ENCODE measurements at regions of chr12 and their contacts with region 1.

Region 1: DNA sequence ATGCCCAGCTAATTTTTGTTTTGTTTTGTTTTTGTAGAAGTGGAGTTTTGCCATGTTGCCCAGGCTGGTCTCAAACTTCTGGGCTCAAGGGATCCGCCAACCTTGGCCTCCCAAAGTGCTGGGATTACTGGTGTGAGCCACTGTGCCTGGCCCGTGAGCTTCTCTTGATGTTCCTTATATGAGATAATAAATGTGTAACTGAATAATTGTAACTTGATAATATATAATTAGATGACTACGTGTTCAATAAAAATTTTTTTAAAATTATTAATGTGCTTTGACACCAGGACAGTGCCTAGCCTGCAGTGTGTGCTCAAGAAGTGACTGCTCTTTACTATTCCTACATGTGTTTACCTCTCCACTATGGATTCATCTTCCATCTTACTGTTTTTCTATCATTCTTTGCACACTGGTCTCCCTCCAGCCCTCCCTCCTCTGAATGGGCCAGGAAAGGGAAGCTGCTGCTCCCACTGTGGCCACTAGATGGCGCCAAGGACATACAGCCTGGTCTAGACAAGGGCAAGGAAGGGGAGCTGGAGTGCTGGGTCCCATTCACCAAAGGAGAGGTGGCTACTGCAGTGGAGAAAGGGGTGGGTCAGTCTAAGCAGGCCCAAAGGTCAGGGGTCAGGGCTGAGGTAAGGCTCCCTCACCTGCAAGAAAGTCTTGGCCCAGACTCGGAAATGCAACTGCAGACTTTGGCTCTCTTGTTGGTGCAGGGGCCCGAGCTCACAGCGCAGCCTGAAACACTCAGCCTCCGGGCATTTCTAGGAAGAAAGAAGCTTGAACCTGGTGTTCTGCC is 14.7 kb upstream of the ZNF385A start:
- DNase-seq: no peak
- H3K4me3 ChIP-seq: no peak overlapping the region
- H3K27me3 ChIP-seq: no peaks in the 10 kb centered on the region
- CTCF ChIP-seq: peak; percentile 100

Region 2: GRCh38 chr12:54385241-54385914 is 13.8 kb before region 1 on chr12:
- CTCF ChIA-PET with region 1: interaction called, 41 read pairs
- POLR2A ChIA-PET with region 1: no interaction called
- DNase-seq: no peak
- H3K4me3 ChIP-seq: no peak overlapping the region
- H3K27me3 ChIP-seq: no peaks in the 10 kb centered on the region
- CTCF ChIP-seq: no peak

Region 3: GRCh38 chr12:54419088-54419892 is 20.1 kb after region 1 on chr12 and contains the start of gene ITGA5:
- CTCF ChIA-PET with region 1: interaction called, 643 read pairs
- POLR2A ChIA-PET with region 1: no interaction called
- DNase-seq: no peak
- H3K4me3 ChIP-seq: peak within 1 kb of the TSS; percentile 95
- H3K27me3 ChIP-seq: no peaks in the 10 kb centered on the region
- CTCF ChIP-seq: no peak
- polyA plus RNA-seq, gene ITGA5: 170 and 375 TPM in 2 replicates

Region 4: DNA sequence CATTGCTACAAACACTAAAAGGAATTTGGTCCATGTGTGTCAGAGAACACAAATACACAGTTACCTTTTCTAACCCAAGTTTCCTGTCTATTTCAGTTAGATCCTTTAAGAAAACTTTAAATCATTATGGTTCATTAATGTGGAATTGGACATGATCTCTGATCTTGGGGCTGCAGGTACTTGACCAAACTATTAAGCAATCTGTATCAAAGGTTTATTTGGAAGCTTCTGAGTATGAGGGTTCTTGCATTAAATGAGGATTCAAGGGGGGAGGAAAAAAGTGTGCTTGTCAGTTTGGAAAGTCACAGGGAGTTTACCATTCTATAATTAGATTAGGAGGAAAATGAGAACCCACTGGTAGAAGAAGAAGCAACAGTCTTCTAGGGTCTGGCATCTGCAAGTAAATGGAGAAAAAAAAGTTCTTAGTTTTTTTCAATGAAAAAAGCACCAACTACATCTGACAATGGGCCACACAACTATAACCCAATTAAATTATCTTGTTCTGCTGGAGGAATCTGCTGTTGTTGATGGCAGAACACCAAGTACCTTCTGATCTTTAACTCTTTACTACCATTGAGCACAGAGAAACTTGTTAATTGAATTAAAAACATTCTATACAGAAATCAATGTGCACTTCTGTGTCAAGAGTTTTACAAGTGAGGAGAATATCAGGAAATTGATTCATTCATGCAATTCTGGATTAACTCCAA is 56.7 kb after region 1 on chr12:
- CTCF ChIA-PET with region 1: interaction called, 643 read pairs
- POLR2A ChIA-PET with region 1: no interaction called
- DNase-seq: no peak
- H3K4me3 ChIP-seq: no peak overlapping the region
- H3K27me3 ChIP-seq: peaks cover 3% of the 10 kb centered on the region
- CTCF ChIP-seq: no peak

Region 5: DNA sequence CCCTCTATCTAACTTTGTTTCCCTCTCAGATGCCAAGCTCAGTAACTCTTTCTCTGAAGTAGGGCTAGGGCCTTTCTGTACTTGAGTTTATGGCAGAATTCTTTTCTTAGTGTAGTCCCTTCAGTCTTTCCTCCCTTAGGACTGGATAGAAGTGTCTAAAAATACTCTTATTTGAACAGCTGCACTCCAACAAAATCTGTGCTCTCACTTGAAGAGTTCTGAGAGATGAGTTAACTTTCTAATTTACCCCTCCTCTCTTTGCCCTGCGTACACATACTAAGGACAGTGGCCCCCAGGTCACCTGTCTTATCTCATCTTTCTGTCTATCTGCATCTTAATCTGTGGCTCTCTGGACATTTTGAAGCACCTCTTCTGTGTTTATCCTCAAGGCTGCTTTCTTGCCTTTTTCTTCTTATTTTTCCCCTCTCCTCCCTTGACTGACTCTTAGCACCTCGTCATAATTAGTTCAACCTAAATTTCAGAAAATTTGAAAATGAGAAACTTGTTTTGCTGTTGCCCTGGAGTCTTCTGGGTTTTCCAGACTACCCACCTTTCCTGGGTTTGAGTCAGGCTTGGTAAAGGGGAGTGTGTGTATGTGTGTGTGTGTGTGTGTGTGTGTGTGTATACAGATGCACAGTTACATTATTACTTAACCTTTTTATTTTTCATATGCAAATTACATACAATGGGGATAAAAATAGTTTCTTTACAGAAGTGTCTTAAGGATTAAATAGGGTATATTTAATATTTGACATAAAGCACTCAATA is 122.3 kb after region 1 on chr12:
- CTCF ChIA-PET with region 1: no interaction called
- POLR2A ChIA-PET with region 1: no interaction called
- DNase-seq: no peak
- H3K4me3 ChIP-seq: no peak overlapping the region
- H3K27me3 ChIP-seq: peaks cover 7% of the 10 kb centered on the region
- CTCF ChIP-seq: no peak

Measured in BJ (cell line).